ENCODE measurements at regions of chr4 and their contacts with region 1.

Region 1: DNA sequence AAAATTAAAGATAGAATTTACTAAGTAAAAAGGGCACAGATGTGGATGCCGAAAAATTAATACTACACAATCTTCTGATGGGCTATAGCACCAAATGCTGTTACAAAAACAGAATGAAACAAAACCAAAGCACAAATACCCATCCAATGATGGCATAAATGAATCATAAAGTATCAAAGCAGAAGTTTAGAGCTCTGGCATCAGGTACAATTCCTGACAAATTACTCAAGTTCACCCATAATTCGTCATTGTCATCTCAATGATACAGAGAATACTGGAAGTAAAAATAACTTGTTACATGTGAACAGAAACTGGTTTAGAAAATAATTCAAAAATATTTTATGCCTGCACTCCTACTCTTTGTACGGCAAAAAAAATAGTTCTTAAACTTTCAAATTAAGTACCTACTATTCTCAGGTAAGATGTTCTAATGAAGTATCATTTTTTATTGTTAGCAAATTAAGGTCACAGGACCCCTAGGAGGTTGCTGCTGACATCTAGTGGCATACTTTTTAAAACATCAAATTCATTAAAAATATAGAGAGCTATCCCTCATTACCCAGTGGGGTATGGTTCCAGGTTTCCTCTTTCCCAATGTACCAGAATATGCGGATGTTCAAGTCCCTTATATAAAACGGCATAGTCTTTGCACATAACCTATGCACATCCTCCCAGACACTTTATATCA is 126.1 kb downstream of the INPP4B start:
- DNase-seq: peak in 2 of 5 donors; percentile 15 to 28
- H3K4me3 ChIP-seq: no peak overlapping the region
- H3K27ac ChIP-seq: no peak overlapping the region
- H3K4me1 ChIP-seq: no peaks in the 10 kb centered on the region
- H3K27me3 ChIP-seq: no peaks in the 10 kb centered on the region
- CTCF ChIP-seq: peak; percentile 39

Region 2: DNA sequence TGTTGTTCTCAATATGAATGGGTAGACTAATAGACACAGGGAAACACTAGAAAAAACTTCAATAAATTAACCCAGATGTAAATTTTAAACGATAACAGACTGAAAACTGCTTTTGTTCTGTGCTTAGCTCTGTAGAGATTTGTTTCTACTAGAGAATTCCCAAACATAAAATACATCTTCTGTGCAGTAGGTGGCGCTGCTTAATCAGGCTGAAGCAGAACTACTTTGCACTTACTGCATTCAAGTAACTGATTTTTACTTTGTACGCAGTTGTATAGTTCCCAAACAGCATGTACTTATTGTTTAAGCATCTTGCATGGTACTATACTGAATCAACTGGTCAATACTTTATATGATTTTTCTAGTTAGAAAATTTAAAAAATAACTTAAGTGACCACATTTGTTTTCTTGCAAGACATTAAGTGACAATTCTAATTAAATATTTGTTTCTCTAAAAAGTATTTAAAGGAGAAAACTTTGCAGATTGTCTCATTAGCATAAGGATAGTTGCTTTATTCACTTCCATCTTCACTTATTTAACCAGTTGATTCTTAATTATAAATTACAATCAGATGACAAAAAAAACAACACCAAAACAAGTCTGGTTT is 593.0 kb before region 1 on chr4:
- intact Hi-C with region 1: loop called (anchors 10 kb)
- DNase-seq: peak in 4 of 5 donors; percentile 46 to 89 (median 76)
- H3K4me3 ChIP-seq: no peak overlapping the region
- H3K27ac ChIP-seq: no peak overlapping the region
- H3K4me1 ChIP-seq: peaks cover 0 to 18% (median 0%) of the 10 kb centered on the region in 3 donors
- H3K27me3 ChIP-seq: no peaks in the 10 kb centered on the region
- CTCF ChIP-seq: peak; percentile 81

Region 3: DNA sequence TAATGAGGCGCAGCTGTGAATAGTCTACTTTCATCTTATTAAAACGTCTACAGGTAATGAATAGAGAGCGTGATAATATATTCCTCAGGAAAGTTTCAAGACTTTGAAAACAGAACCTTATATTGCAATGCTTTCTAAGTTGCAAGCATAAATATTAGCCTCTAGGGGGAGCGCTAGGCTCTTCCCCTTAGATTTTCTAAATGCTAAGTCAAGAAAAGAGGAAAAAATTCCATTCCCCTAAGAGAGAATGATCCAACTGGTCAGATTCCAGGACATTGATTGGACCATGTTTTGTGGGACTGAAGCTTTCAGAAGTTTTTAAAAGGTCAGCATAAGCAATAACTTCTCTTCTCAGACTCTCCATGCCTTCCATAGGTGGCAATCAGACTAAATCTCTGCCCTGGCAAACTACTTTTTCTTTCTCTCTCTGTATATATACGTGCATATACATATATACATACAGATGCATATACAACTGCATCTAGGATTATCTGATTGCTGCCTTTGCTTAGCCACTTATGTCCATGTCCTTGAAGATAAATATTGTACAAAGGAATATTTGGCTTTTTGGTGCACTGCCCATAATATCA is 366.8 kb before region 1 on chr4:
- intact Hi-C with region 1: loop called (anchors 10 kb)
- DNase-seq: peak in 2 of 5 donors; percentile 77 to 82
- H3K4me3 ChIP-seq: peak overlapping the region in 1 of 3 donors; percentile 9
- H3K27ac ChIP-seq: no peak overlapping the region
- H3K4me1 ChIP-seq: peaks cover 0 to 16% (median 5%) of the 10 kb centered on the region in 3 donors
- H3K27me3 ChIP-seq: no peaks in the 10 kb centered on the region
- CTCF ChIP-seq: peak; percentile 88

Region 4: GRCh38 chr4:142846729-142847596 is 127.0 kb after region 1 on chr4:
- intact Hi-C with region 1: no loop called
- DNase-seq: peak; percentile 68 to 83 (median 79)
- H3K4me3 ChIP-seq: peak overlapping the region; percentile 30 to 68 (median 66)
- H3K27ac ChIP-seq: peak overlapping the region; percentile 17 to 32
- H3K4me1 ChIP-seq: peaks cover 0 to 4% (median 0%) of the 10 kb centered on the region in 3 donors
- H3K27me3 ChIP-seq: no peaks in the 10 kb centered on the region
- CTCF ChIP-seq: peak; percentile 44

Region 5: DNA sequence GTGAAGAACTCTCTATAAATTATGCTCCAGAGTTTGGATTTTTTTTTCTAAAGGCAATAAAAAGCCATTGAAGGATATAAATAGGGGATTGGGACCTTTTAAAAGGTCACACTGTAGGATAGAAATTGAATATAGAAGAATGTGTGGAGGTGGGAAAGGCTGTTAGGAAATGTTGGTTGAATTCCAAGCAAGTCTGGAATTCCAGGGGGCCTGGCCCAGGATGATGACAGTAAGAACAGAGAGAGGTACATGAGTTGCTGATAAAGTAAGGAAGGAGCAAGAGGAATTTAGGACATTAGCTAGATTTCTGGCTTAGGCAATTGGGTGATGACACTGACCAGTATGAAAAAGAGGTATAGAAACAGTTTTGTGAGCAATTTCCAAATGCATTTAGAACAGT is 369.3 kb after region 1 on chr4:
- intact Hi-C with region 1: no loop called
- DNase-seq: no peak
- H3K4me3 ChIP-seq: no peak overlapping the region
- H3K27ac ChIP-seq: no peak overlapping the region
- H3K4me1 ChIP-seq: no peaks in the 10 kb centered on the region
- H3K27me3 ChIP-seq: no peaks in the 10 kb centered on the region
- CTCF ChIP-seq: no peak